BJ (cell line): ENCODE measurements at regions of chr6 and their contacts with region 1.

Region 1: DNA sequence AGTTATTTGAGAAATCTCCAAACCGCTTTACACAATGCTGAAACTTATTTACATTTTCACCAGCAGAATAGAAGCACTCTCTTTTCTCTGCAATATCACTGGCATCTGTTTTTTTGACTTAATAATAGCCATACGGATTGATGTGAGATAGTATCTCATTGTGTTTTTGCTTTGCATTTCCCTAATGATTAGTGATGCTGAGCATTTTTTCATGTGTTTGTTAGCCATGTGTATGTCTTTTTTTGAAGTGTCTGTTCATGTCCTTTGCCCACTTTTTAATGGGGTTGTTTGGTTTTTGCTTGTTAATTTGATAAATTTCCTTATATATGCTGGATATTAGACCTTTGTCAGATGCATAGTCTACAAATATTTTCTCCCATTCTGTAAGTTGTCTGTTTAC is 73.6 kb downstream of the FBXO5 start:
- DNase-seq: no peak
- H3K4me3 ChIP-seq: no peak overlapping the region
- H3K27me3 ChIP-seq: no peaks in the 10 kb centered on the region
- CTCF ChIP-seq: no peak

Region 2: GRCh38 chr6:152897799-152898399 is 11.3 kb before region 1 on chr6:
- CTCF ChIA-PET with region 1: interaction called, 14 read pairs
- POLR2A ChIA-PET with region 1: no interaction called
- DNase-seq: no peak
- H3K4me3 ChIP-seq: no peak overlapping the region
- H3K27me3 ChIP-seq: no peaks in the 10 kb centered on the region
- CTCF ChIP-seq: peak; percentile 94